ENCODE measurements at regions of chr1 and their contacts with region 1.

Region 1: DNA sequence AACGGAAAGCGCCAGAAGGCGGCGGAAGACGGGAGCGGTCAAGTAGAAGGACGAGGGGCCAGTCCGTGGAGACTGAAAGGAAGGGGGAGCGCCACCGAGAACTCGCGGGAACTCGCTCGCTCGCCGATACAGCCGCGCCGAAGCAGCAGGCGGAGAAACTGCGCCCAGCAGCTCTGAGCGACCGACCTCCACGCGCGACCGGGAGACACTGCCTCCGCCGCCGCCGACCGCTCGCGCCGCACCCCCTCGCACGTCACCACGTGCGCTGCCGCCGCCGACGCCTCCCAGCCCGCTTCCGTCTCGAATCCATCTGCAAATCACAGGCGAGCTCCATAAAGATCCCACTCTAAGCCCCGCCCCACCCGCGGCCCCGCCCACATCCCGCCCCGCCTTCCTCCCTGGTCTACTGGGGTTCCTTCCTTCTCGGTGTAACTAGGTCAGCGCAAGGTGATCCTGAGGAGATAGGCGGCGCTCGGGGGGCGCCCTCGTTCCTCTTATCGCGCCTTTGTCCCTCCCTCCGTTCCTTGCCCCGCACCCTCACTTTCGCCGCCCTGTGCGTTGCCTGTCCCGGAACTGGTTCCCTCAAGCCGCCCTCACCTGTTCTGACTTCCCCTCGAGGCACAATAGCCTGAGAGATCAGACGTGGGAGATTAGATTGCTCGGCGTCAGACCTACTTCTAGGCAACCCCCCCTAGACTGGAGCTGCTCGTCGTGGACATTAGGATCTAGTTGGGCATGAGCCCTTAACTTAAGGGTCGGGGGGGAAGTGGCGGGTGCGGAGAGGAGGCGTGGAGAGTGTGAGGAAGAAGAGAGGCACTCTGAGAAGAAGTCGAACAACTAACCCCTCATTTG is at the start of gene IVNS1ABP:
- DNase-seq: peak; percentile 98
- H3K4me3 Mint-ChIP-seq: peak within 1 kb of the TSS; percentile 92
- H3K27ac Mint-ChIP-seq: peak within 1 kb of the TSS; percentile 99
- H3K4me1 Mint-ChIP-seq: peaks cover 49% of the 10 kb centered on the region
- H3K27me3 Mint-ChIP-seq: no peaks in the 10 kb centered on the region
- total RNA-seq, gene IVNS1ABP: 133 to 134 TPM

Region 2: GRCh38 chr1:184754476-184755225 is 562.6 kb before region 1 on chr1 and contains the start of gene EDEM3:
- CTCF ChIA-PET with region 1: no interaction called
- POLR2A ChIA-PET with region 1: interaction called, 3 read pairs
- intact Hi-C with region 1: loop called (anchors 1 kb)
- DNase-seq: peak; percentile 99
- H3K4me3 Mint-ChIP-seq: peak within 1 kb of the TSS; percentile 93
- H3K27ac Mint-ChIP-seq: peak within 1 kb of the TSS; percentile 93
- H3K4me1 Mint-ChIP-seq: peaks cover 38% of the 10 kb centered on the region
- H3K27me3 Mint-ChIP-seq: peaks cover 2% of the 10 kb centered on the region
- total RNA-seq, gene EDEM3: 14.5 to 15.2 TPM

Region 3: GRCh38 chr1:185044981-185045813 is 272.1 kb before region 1 on chr1 and contains the start of gene RNF2:
- CTCF ChIA-PET with region 1: no interaction called
- POLR2A ChIA-PET with region 1: no interaction called
- intact Hi-C with region 1: loop called (anchors 2 kb)
- DNase-seq: peak; percentile 85
- H3K4me3 Mint-ChIP-seq: peak within 1 kb of the TSS; percentile 90
- H3K27ac Mint-ChIP-seq: peak within 1 kb of the TSS; percentile 72
- H3K4me1 Mint-ChIP-seq: peaks cover 39% of the 10 kb centered on the region
- H3K27me3 Mint-ChIP-seq: no peaks in the 10 kb centered on the region
- total RNA-seq, gene RNF2: 20.7 to 21.2 TPM

Region 4: DNA sequence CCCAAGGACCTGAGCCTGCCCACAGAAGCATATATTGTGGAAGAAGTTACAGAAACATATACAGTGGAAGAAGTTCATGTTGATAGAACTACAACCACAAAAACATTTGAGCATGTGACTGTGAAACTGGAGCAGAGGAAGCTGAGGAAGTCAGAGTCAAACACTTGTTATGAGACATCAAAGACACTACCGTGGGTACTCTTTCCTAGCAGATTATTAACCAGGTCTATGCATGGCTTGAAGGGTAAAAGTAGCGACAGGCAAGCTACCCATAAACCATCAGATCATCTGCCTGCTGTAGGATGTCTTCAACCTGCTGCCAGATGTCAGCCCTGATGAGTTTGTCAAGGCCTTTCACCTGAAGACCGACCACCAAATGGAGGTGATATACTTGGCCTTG is 36.0 kb before region 1 on chr1:
- CTCF ChIA-PET with region 1: no interaction called
- POLR2A ChIA-PET with region 1: no interaction called
- intact Hi-C with region 1: loop called (anchors 1 kb)
- DNase-seq: peak; percentile 20
- H3K4me3 Mint-ChIP-seq: peak overlapping the region; percentile 28
- H3K27ac Mint-ChIP-seq: peak overlapping the region; percentile 88
- H3K4me1 Mint-ChIP-seq: peaks cover 57% of the 10 kb centered on the region
- H3K27me3 Mint-ChIP-seq: no peaks in the 10 kb centered on the region

Region 5: GRCh38 chr1:185439727-185440415 is 122.6 kb after region 1 on chr1:
- CTCF ChIA-PET with region 1: interaction called, 6 read pairs
- POLR2A ChIA-PET with region 1: interaction called, 5 read pairs
- intact Hi-C with region 1: loop called (anchors 1 kb)
- DNase-seq: peak; percentile 49
- H3K4me3 Mint-ChIP-seq: no peak overlapping the region
- H3K27ac Mint-ChIP-seq: no peak overlapping the region
- H3K4me1 Mint-ChIP-seq: peaks cover 8% of the 10 kb centered on the region
- H3K27me3 Mint-ChIP-seq: no peaks in the 10 kb centered on the region

Region 6: DNA sequence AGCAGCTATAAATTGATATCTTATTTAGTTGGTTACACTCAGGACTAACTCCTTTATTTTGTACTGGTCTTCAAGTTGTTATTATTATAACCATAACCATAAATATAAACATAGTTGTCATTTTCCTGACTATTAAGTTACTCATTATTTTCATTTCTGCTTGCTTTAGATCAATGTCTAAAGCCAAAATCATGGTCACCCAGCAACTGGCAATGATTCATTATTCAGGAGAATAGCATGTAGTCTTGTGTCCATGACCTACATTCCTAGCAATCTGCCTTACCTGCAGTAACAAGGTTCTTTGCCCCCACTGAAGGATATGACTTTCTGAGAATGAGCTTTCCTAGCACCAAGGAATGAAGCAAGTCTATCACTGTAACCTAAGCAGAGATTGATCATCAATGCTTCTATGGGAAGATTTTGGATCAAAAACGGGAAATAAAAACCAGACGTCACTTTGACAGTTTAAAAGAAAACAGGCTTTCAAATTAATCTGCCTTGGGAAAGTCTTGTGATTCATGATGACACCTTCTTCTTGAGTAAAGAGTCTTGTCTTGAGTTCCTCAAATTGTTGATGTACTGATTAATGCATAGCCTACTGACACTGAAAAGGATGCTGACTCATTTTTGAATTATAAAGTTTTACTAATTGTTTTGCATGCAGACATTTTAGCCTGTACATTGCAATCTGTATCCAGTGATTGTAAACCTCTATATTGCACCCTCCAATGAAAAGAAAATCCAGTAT is 203.1 kb after region 1 on chr1:
- CTCF ChIA-PET with region 1: no interaction called
- POLR2A ChIA-PET with region 1: no interaction called
- intact Hi-C with region 1: no loop called
- DNase-seq: no peak
- H3K4me3 Mint-ChIP-seq: no peak overlapping the region
- H3K27ac Mint-ChIP-seq: peak overlapping the region; percentile 78
- H3K4me1 Mint-ChIP-seq: peaks cover 4% of the 10 kb centered on the region
- H3K27me3 Mint-ChIP-seq: no peaks in the 10 kb centered on the region

Region 7: DNA sequence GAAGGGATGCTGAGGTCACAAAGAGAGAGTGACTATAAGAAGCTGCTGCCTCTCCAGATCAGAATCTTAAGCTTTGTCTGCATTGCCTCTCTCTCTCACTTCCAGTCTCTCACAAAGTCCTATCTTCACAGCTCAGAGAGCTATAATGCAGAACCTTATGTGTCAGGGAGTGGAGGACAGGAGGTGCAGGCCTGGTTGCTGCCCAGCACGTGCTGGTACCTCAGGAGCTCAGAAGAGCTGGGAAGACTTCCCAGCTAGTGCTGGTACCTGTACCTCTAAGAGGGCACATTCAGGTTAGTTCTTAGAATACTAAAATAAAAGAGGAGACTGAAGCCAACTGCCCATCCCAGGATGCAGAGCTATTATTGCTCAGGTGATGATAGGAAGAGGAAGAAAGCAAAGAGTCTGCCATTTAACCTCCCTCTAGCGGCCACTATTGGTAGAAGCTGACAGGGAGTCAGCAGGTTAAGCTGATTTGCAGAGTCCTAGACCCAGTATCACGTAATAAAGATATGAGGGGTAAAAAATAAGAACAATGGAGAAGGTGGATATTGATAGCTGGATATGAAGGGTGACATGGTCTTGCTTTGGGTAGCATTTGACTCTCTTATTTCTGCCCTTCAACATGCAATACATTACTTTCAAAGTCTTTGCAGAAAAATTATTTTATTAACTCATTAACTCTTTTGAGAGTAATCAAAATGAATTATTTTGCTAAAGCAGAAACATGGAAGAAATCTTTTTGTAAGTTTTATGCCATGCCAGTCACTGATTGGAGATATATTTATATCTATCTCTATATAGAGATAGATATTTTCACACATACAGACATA is 278.8 kb after region 1 on chr1:
- CTCF ChIA-PET with region 1: interaction called, 27 read pairs
- POLR2A ChIA-PET with region 1: interaction called, 4 read pairs
- intact Hi-C with region 1: no loop called
- DNase-seq: peak; percentile 55
- H3K4me3 Mint-ChIP-seq: no peak overlapping the region
- H3K27ac Mint-ChIP-seq: no peak overlapping the region
- H3K4me1 Mint-ChIP-seq: peaks cover 23% of the 10 kb centered on the region
- H3K27me3 Mint-ChIP-seq: no peaks in the 10 kb centered on the region

Region 8: GRCh38 chr1:185681034-185681633 is 363.9 kb after region 1 on chr1:
- CTCF ChIA-PET with region 1: interaction called, 19 read pairs
- POLR2A ChIA-PET with region 1: interaction called, 8 read pairs
- intact Hi-C with region 1: no loop called
- DNase-seq: no peak
- H3K4me3 Mint-ChIP-seq: no peak overlapping the region
- H3K27ac Mint-ChIP-seq: no peak overlapping the region
- H3K4me1 Mint-ChIP-seq: peaks cover 23% of the 10 kb centered on the region
- H3K27me3 Mint-ChIP-seq: peaks cover 2% of the 10 kb centered on the region

Measured in activated CD4-positive, alpha-beta memory T cell treated with anti-CD3 and anti-CD28 coated beads for 36 hours (primary cell).